HCT116 (cell line): ENCODE measurements at regions of chr4 and their contacts with region 1.

Region 1: DNA sequence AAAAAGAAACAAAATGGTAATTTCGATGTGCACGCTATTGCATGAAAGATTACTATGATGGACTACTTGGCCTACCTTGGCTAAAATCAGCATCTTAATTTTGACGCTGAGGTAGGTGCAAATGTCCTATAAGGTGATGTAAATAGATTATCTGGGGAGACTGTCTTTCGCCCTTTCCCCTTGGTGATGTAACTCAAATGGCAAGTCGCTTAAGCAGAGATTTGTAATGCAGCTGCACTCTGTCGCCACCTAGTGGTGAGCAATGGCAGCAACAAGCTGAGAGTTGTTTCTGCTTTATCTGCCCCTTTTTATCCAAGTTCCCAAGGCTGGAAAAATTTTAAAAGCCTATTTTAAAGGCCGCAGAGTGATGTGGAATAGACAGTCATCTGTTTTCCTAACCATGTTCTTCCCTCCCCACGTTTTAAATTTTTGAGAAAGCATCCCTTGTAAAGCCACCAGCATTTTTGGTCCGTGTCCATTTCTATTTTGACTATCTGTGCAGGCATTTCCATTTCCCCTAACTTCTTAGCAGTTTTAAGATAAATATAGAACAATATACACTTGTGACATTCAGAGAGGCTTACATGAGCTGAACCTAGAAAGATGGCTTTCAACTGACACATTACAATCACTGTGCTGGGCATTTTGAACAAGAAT is 62.4 kb upstream of the PDLIM3 start:
- DNase-seq: peak; percentile 66
- ATAC-seq: peak; percentile 88
- H3K4me3 ChIP-seq: no peak overlapping the region
- H3K27ac ChIP-seq: no peak overlapping the region
- H3K4me1 ChIP-seq: no peaks in the 10 kb centered on the region
- H3K27me3 ChIP-seq: no peaks in the 10 kb centered on the region
- CTCF ChIP-seq: peak; percentile 89 to 98 (median 98)
- POLR2A ChIP-seq: no peak
- RAD21 ChIP-seq: peak; percentile 97

Region 2: GRCh38 chr4:185183619-185184281 is 413.9 kb before region 1 on chr4:
- CTCF ChIA-PET with region 1: interaction called, 5 read pairs
- POLR2A ChIA-PET with region 1: no interaction called
- RAD21 ChIA-PET with region 1: no interaction called
- intact Hi-C with region 1: loop called (anchors 2 kb)
- DNase-seq: peak; percentile 78
- ATAC-seq: peak; percentile 84
- H3K4me3 ChIP-seq: no peak overlapping the region
- H3K27ac ChIP-seq: no peak overlapping the region
- H3K4me1 ChIP-seq: no peaks in the 10 kb centered on the region
- H3K27me3 ChIP-seq: no peaks in the 10 kb centered on the region
- CTCF ChIP-seq: peak; percentile 66 to 81 (median 81); a peak in 5 of 6 replicates
- POLR2A ChIP-seq: no peak
- RAD21 ChIP-seq: peak; percentile 78

Region 3: DNA sequence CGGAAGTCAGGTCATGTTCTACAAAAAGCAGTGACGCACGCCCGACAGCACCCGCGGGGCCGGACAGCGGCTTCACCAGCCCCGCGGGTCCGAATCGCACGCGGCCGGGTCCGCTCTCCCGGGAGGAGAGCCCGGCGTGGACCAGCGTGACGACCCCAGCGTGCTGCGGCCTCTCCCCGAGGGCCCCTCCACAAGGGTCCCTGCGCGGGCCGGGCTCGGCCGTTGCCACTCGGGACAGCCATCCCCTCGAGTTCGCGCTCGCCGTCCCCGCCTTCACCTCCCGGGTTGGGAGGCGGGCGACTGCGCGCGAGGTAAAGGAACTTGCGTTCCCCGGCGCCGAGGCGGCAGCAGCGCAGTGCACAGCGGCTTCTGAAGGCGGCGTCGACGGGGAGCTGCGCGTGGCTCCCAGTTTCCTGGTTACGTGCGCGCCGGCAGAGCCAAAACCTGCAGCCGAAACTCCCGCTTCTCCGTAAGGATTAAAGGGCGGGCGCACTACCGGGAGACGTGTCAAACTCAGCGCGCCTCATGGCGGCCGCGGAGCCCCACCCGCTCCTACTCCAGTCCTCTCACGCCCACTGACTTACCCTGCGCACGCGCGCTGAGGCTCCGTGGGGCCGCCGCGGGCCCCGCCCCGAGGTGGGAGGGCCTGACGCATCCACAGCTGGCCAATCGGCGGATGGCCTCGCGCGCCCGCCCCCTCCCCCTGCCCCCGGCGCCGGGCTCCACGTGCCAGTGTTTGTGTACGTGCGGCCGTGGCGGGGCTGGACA is 201.5 kb before region 1 on chr4:
- CTCF ChIA-PET with region 1: no interaction called
- POLR2A ChIA-PET with region 1: interaction called, 3 read pairs
- RAD21 ChIA-PET with region 1: no interaction called
- intact Hi-C with region 1: loop called (anchors 2 kb)
- DNase-seq: peak; percentile 92
- ATAC-seq: peak; percentile 92
- H3K4me3 ChIP-seq: peak overlapping the region; percentile 57 to 61
- H3K27ac ChIP-seq: peak overlapping the region; percentile 90
- H3K4me1 ChIP-seq: peaks cover 11 to 29% of the 10 kb centered on the region in 2 experiments
- H3K27me3 ChIP-seq: no peaks in the 10 kb centered on the region
- CTCF ChIP-seq: no peak
- POLR2A ChIP-seq: peak; percentile 79
- RAD21 ChIP-seq: no peak

Region 4: GRCh38 chr4:185425647-185426352 is 171.9 kb before region 1 on chr4 and contains the start of gene UFSP2:
- CTCF ChIA-PET with region 1: no interaction called
- POLR2A ChIA-PET with region 1: no interaction called
- RAD21 ChIA-PET with region 1: no interaction called
- intact Hi-C with region 1: loop called (anchors 1 kb)
- DNase-seq: peak; percentile 87
- ATAC-seq: peak; percentile 90
- H3K4me3 ChIP-seq: peak within 1 kb of the TSS; percentile 95
- H3K27ac ChIP-seq: peak within 1 kb of the TSS; percentile 64
- H3K4me1 ChIP-seq: peaks cover 3 to 16% of the 10 kb centered on the region in 2 experiments; a peak in 3 of 4 replicates
- H3K27me3 ChIP-seq: no peaks in the 10 kb centered on the region
- CTCF ChIP-seq: no peak
- POLR2A ChIP-seq: no peak
- RAD21 ChIP-seq: no peak
- total RNA-seq, gene UFSP2: 29.4 TPM

Region 5: DNA sequence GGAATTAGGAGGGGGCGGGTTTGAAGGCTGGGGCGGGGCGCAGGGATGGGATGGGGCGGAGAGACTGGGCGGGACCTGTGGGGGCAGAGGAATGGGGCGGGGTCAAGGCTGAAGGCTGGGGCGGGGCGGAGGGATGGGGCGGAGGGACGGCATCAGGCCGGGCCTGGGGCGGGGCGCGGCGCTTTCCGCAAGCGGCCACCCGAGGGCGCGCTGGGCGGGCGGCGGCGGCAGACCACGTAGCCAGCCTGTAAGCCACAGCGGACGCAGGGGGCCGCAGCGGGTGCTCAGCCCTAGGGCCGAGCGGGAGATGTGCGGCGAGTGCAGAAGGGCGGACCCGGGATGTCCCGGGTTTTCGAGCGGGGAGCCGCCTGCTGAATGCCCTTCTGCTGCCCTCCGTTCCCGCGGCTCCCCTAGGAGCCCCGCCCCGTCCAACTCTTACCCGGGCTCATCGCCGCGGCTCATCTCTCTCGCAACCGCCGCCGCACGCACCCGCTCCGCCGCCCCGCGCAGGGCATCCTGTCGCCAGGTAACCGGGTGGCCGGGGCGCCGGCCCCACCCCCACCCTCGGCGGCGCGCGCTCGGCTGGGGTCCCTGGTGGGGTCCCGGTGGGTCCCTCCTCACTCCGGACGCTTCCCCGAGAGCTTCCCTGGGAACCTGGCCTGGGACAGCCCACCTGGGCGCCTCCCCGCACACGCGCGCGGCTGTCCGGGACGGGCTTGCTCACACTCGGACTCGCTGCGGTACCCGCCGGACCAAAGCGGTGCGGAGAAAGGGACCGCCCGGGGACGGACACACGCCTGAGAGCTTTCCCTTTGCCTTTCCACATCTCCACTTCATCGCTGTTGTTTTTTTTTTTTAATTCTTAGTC is 126.2 kb before region 1 on chr4 and contains the start of gene CCDC110:
- CTCF ChIA-PET with region 1: interaction called, 10 read pairs
- POLR2A ChIA-PET with region 1: no interaction called
- RAD21 ChIA-PET with region 1: no interaction called
- intact Hi-C with region 1: loop called (anchors 1 kb)
- DNase-seq: peak; percentile 80
- ATAC-seq: peak; percentile 95
- H3K4me3 ChIP-seq: peak within 1 kb of the TSS; percentile 71
- H3K27ac ChIP-seq: peak within 1 kb of the TSS; percentile 42; the same call in 1 of the 2 replicates
- H3K4me1 ChIP-seq: peaks cover 2 to 12% of the 10 kb centered on the region in 2 experiments; a peak in 3 of 4 replicates
- H3K27me3 ChIP-seq: no peaks in the 10 kb centered on the region
- CTCF ChIP-seq: peak; percentile 33 to 51 (median 50); a peak in 5 of 6 replicates
- POLR2A ChIP-seq: no peak
- RAD21 ChIP-seq: peak; percentile 75
- total RNA-seq, gene CCDC110: 2.7 TPM

Region 6: DNA sequence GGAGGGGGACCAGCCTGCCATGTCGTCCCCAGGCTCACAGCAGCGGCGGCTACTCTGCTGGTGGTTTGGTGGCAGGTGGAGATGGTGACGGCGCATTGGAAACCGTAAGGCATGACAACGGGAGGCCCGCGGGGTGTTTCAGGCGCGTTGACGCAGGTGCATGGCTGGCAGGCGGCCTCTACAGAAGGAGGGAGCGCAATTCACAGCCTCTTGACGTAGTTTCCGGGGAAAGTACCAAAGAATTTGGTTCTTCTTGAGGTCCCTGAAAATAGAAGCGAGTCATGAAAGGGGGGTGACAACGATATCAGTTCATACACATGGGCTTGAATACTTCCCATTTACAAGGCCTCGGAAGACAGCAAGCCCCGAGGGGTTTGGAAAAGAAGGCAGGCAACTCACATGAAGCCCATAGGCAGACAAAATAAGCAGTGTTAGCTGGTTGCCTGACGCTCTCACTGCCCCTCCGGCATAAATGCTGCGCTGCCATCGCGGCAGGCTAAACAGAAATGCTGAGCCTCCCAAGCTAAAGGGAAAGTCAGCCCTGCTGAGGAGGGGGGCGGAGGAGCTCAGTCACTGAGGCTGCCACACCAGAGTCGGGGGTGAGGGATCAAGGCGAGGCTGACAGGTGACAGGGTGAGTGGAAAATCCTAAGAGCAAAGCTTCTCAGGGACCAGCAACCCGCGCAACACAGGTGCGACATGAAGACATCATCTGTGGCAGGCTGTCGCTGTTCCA is 10.1 kb before region 1 on chr4:
- CTCF ChIA-PET with region 1: interaction called, 12 read pairs
- POLR2A ChIA-PET with region 1: interaction called, 3 read pairs
- RAD21 ChIA-PET with region 1: no interaction called
- intact Hi-C with region 1: no loop called
- DNase-seq: no peak
- ATAC-seq: no peak
- H3K4me3 ChIP-seq: no peak overlapping the region
- H3K27ac ChIP-seq: no peak overlapping the region
- H3K4me1 ChIP-seq: peaks cover 6 to 18% of the 10 kb centered on the region in 2 experiments; a peak in 3 of 4 replicates
- H3K27me3 ChIP-seq: no peaks in the 10 kb centered on the region
- CTCF ChIP-seq: no peak
- POLR2A ChIP-seq: no peak
- RAD21 ChIP-seq: no peak

Region 7: DNA sequence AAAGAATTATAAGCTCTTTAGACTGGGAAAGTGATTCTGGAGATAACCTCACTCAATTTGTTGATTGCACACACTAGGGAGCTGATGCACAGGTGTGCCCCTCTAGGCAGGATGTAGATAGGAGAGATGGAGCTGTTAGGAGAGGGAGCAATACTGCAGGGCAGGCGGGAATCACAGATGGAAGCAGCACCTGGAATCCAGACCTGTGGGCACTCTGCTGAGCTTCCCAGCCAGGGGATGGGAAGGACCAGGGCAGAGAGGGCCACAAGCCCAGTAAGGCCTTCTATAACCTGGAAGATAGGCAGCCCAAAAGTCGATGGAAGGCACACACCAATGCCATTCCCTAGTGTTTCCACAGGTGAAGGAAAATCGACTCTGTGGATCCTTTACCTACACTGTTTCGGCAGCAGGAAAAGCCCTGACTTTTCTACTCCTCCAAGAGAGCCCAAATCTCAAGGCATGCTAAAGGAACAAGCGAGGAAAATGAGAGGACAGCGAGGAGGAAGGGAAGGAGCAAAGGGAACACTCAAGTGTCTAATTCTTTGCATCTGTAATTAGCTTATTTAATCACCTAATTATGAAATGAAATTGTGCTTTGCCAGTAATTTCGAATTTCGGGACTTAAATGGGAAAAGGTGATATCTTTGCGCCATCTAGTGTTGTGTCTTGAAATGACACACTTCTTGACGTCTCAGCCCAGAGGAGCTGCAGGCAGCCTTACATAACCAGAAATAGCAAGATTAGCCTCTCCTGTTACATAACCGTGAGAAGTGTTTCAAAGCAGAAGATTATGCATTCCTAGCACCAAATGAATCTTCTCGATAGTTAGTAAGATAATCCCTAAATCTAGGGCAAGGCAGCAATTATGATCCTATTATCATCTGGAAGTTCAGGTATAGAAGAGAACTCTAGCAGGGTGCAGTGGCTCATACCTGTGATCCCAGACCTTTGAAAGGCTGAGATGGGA is 440.3 kb after region 1 on chr4:
- CTCF ChIA-PET with region 1: interaction called, 7 read pairs
- POLR2A ChIA-PET with region 1: interaction called, 4 read pairs
- RAD21 ChIA-PET with region 1: no interaction called
- intact Hi-C with region 1: loop called (anchors 1 kb)
- DNase-seq: peak; percentile 79
- ATAC-seq: peak; percentile 90
- H3K4me3 ChIP-seq: no peak overlapping the region
- H3K27ac ChIP-seq: no peak overlapping the region
- H3K4me1 ChIP-seq: no peaks in the 10 kb centered on the region
- H3K27me3 ChIP-seq: peaks cover 5% of the 10 kb centered on the region
- CTCF ChIP-seq: peak; percentile 49 to 78 (median 72)
- POLR2A ChIP-seq: no peak
- RAD21 ChIP-seq: peak; percentile 96